ENCODE measurements at regions of chr4 and their contacts with region 1.

Region 1: DNA sequence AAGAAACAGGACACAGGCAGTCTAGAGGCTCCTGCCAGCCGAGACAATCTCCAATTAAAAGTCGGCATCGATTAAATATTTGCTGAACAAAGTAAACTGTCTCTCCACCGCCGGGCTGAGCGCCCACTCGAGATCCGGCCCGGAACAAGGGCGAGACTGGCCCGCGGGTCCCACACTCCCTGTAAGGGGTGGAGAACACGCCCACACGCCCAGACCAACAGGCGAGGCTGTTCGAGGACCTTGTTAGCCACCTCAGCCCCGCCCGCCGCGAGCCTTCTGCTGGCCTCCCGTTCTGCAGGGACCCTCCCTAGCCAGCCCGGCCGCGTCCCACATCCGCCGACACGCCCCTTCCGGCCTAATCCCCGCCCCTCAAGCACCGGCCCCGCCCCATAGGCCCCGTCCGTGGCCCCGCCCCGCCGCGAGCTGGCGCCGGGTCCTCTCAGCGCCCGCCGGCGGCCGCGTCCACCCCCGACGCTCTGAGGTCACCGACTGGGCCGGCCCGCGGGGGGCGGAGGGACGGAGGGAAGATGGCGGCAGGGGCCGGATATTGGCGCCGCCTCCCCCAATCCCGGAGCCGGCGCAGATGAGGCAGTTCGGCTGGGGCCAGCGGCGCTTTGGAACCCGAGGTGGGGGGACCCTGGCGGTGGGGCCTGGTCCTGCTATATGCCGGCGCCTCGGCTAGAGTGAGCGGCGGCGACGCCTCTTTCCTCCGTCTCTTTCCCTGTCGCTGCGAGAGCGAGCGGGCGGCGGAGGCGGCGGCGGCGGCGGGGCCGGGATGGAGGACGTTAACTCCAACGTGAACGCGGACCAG is at the start of gene SLAIN2:
- DNase-seq: peak; percentile 99
- H3K4me3 Mint-ChIP-seq: peak within 1 kb of the TSS; percentile 99
- H3K27ac Mint-ChIP-seq: peak within 1 kb of the TSS; percentile 98
- H3K4me1 Mint-ChIP-seq: peaks cover 64% of the 10 kb centered on the region
- H3K27me3 Mint-ChIP-seq: no peaks in the 10 kb centered on the region
- total RNA-seq, gene SLAIN2: 54.9 to 63.8 TPM

Region 2: GRCh38 chr4:47463235-47463956 is 877.8 kb before region 1 on chr4 and contains the start of gene COMMD8:
- CTCF ChIA-PET with region 1: no interaction called
- POLR2A ChIA-PET with region 1: no interaction called
- intact Hi-C with region 1: loop called (anchors 2 kb)
- DNase-seq: peak; percentile 98
- H3K4me3 Mint-ChIP-seq: peak within 1 kb of the TSS; percentile 85
- H3K27ac Mint-ChIP-seq: peak within 1 kb of the TSS; percentile 68
- H3K4me1 Mint-ChIP-seq: peaks cover 26% of the 10 kb centered on the region
- H3K27me3 Mint-ChIP-seq: no peaks in the 10 kb centered on the region
- total RNA-seq, gene COMMD8: 27.5 to 27.9 TPM

Region 3: DNA sequence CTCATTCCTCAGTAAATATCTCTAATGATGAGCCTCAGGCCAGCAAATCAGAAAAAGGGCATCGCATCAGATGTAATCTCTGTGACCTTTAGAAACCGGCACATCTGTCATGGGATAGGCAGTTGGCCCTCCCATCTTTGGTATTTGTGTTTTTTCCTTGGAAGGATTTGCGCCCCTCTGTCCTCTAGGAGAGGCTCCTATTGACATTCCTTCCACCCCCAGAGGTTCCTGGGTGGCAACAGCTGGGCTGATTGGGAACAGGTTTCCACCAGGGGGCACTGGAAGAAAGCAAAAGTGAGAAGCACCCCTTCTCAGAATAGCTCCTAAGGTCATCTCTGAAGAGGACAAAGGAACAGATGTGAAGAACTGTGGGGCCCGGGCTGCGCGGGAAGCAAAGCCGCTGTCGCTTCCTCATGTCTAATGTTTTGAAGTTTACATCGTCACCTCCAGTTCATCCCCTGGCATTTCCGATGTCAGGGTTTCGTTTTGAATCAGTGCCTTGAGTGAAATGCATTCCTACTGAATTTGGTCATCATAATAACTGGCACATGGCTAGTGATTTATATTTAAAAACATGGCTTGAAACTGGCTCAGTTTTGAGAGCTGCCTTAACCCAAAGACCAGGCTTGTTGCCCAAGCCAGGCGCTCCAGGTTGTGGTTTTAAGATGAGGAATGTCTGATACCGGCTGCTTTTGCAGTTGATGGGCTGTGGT is 213.3 kb before region 1 on chr4:
- CTCF ChIA-PET with region 1: no interaction called
- POLR2A ChIA-PET with region 1: no interaction called
- intact Hi-C with region 1: loop called (anchors 2 kb)
- DNase-seq: peak; percentile 93
- H3K4me3 Mint-ChIP-seq: peak overlapping the region; percentile 63
- H3K27ac Mint-ChIP-seq: peak overlapping the region; percentile 95
- H3K4me1 Mint-ChIP-seq: peaks cover 89% of the 10 kb centered on the region
- H3K27me3 Mint-ChIP-seq: no peaks in the 10 kb centered on the region

Region 4: DNA sequence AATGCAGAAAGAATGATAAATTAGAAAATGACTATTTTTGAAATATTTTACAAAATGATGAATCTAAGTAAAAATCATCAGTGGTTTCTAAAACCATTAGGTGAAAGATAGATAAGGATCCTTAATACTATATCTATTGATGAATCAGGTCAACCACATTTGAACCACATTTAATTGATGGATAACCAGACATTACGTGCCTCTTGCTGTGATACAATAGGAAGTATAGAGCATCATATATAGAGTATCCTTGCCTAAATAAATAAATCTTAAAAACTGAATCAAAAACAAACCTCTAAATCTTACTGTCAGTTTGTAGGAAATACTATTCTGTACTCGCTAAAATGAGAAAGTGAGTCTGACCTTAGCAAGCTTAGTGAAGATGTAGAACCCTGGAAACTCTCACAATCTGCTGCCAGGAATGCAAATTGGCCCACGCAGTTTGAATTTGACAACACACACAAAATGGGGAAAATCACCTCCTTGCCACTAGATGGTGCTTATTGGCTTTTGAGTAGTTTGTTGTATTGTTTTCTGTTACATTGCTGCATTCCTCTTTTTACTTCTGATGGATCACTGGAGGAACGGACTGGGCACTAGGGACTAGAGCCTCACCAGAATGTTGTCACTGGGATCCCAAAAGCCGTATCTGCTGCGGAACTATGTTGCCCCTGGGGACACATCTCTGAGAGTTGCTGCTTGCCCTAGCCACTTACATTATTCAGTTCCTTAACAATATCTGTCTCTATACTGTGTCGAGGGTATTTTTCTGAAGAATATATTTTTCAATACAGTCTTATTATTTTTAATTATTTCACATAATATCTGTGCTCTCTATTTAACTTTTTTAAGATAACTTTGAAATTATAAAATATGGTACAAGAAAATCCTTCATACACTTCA is 25.2 kb before region 1 on chr4:
- CTCF ChIA-PET with region 1: interaction called, 4 read pairs
- POLR2A ChIA-PET with region 1: no interaction called
- intact Hi-C with region 1: loop called (anchors 2 kb)
- DNase-seq: peak; percentile 43
- H3K4me3 Mint-ChIP-seq: no peak overlapping the region
- H3K27ac Mint-ChIP-seq: no peak overlapping the region
- H3K4me1 Mint-ChIP-seq: peaks cover 5% of the 10 kb centered on the region
- H3K27me3 Mint-ChIP-seq: no peaks in the 10 kb centered on the region

Region 5: DNA sequence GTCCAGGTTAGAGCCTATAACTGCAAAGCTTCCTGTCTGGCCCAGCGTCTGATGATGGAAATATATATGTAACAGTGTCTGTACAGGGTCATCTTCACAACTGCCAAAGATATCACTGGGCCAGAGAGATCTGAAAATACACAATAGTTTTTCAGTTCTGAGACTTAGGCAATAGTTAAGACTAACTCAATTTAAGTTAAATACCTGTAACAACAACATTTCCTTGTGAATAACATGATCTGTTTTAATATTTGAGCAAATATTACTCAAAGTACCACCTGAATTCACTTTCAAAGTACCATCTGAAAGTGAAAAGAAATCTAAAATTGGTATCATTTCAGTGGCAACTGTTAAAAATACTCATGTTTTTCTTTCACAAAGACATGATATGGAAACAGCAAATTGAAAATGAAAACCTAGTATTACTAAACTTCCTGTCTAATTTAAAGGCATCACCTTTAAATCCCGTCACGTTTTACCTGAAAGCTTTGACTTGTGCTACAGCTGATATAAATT is 158.4 kb after region 1 on chr4:
- CTCF ChIA-PET with region 1: no interaction called
- POLR2A ChIA-PET with region 1: no interaction called
- intact Hi-C with region 1: loop called (anchors 5 kb)
- DNase-seq: no peak
- H3K4me3 Mint-ChIP-seq: no peak overlapping the region
- H3K27ac Mint-ChIP-seq: no peak overlapping the region
- H3K4me1 Mint-ChIP-seq: peaks cover 15% of the 10 kb centered on the region
- H3K27me3 Mint-ChIP-seq: no peaks in the 10 kb centered on the region

Region 6: GRCh38 chr4:48906206-48907173 is 565.3 kb after region 1 on chr4 and contains the start of gene OCIAD2:
- CTCF ChIA-PET with region 1: no interaction called
- POLR2A ChIA-PET with region 1: no interaction called
- intact Hi-C with region 1: loop called (anchors 5 kb)
- DNase-seq: peak; percentile 90
- H3K4me3 Mint-ChIP-seq: peak within 1 kb of the TSS; percentile 84
- H3K27ac Mint-ChIP-seq: peak within 1 kb of the TSS; percentile 88
- H3K4me1 Mint-ChIP-seq: peaks cover 46% of the 10 kb centered on the region
- H3K27me3 Mint-ChIP-seq: no peaks in the 10 kb centered on the region
- total RNA-seq, gene OCIAD2: 54.2 to 71.6 TPM